ENCODE measurements at regions of chr16 and their contacts with region 1.

Region 1: GRCh38 chr16:1964506-1965395 is at the start of gene RPS2:
- DNase-seq: peak; percentile 99
- H3K4me3 ChIP-seq: peak within 1 kb of the TSS; percentile 88
- H3K27ac ChIP-seq: peak within 1 kb of the TSS; percentile 95
- H3K4me1 ChIP-seq: peaks cover 19% of the 10 kb centered on the region
- H3K27me3 ChIP-seq: no peaks in the 10 kb centered on the region
- CTCF ChIP-seq: peak; percentile 3; the same call in 1 of the 2 replicates
- total RNA-seq, gene RPS2: 3,326 and 3,385 TPM in 2 replicates

Region 2: DNA sequence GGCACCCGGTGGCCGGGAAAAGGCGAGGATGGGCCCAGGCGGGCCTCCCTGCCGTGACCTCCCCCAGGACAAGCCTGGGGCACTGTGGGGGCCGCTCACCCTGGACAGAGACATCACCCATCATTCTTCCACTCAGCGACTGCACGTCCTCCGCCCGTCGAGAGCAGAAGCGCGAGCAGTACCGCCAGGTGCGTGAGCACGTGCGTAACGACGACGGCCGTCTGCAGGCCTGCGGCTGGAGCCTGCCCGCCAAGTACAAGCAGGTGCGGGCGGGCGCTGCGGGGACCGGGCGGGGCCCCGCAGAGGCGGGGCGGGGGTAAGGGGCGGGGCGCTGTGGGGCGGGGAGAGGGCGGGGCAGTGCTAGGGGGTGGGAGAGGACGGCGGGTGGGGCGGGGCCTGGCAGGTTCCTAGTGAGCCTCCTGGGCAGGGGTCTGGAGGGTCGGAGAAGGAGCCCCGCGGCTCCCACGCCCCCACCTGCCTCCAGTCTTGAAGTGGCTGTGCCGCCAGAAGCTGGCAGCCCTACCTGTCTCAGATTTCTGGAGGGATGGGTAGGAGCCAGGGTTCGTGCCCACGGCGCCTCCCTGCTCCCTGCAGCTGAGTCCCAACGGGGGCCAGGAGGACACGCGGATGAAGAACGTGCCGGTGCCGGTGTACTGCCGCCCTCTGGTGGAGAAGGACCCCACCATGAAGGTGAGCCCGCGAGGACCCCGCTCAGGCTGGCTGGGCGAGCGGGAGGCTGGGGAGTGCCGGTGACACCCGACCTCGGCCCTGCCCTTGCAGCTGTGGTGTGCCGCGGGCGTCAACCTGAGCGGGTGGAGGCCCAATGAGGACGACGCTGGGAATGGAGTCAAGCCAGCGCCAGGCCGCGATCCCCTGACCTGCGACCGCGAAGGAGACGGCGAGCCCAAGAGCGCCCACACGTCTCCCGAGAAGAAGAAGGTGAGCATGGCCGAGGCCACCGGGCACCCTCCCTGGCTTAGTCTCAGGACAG is 200.9 kb before region 1 on chr16:
- CTCF ChIA-PET with region 1: no interaction called
- POLR2A ChIA-PET with region 1: no interaction called
- intact Hi-C with region 1: no loop called
- DNase-seq: peak; percentile 49
- H3K4me3 ChIP-seq: no peak overlapping the region
- H3K27ac ChIP-seq: no peak overlapping the region
- H3K4me1 ChIP-seq: no peaks in the 10 kb centered on the region
- H3K27me3 ChIP-seq: no peaks in the 10 kb centered on the region
- CTCF ChIP-seq: peak; percentile 45; the same call in 1 of the 2 replicates

Region 3: DNA sequence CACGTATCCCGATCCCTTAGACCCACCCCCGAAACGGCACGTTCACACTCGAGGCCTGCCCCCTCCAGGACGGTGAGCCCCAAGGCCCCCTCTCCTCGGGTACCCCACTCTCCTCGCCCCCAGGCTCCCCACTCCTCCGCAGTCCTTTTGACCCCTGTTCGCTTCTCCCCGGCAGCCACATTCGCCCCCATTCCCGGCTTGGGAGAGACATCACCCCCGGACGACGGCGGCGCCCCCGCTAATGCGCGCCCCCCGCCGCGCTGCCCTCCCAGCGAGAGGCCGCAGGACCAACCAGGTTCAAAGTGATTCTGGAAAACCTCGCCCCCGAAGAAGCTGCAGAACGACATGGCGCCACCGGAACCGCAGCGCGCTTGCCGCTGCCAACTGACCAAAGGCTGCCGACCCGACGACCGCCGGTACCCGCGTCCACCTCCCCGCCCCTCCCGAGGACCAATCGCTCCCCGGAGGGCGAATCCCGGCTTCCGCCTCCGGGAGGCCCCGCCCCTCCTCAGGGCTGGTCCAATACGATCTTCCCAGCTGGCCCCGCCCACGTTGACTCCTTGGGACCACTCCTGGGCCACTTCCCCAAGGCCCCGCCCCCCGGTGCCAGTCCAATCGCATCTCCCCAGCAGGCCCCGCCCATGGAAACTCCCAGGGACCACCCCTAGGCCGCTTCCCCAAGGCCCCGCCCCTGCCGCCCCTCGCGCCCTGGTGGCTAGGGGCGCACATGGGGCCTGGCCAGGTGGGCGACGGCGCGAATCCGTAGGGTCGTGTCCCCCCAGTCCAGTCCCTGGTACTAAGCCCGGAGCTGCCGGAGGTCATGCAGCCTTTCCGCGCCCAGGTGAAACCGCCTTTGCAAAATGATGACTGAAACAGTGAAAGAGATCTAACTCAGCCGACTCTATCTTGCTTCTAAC is 21.7 kb before region 1 on chr16 and contains the start of gene MSRB1:
- CTCF ChIA-PET with region 1: no interaction called
- POLR2A ChIA-PET with region 1: no interaction called
- intact Hi-C with region 1: no loop called
- DNase-seq: peak; percentile 100
- H3K4me3 ChIP-seq: peak within 1 kb of the TSS; percentile 73
- H3K27ac ChIP-seq: peak within 1 kb of the TSS; percentile 73
- H3K4me1 ChIP-seq: peaks cover 18% of the 10 kb centered on the region
- H3K27me3 ChIP-seq: no peaks in the 10 kb centered on the region
- CTCF ChIP-seq: 0 out of 2 replicates have a peak, but pooled peaks have one; percentile 13
- total RNA-seq, gene MSRB1: 17.7 and 23.4 TPM in 2 replicates

Region 4: DNA sequence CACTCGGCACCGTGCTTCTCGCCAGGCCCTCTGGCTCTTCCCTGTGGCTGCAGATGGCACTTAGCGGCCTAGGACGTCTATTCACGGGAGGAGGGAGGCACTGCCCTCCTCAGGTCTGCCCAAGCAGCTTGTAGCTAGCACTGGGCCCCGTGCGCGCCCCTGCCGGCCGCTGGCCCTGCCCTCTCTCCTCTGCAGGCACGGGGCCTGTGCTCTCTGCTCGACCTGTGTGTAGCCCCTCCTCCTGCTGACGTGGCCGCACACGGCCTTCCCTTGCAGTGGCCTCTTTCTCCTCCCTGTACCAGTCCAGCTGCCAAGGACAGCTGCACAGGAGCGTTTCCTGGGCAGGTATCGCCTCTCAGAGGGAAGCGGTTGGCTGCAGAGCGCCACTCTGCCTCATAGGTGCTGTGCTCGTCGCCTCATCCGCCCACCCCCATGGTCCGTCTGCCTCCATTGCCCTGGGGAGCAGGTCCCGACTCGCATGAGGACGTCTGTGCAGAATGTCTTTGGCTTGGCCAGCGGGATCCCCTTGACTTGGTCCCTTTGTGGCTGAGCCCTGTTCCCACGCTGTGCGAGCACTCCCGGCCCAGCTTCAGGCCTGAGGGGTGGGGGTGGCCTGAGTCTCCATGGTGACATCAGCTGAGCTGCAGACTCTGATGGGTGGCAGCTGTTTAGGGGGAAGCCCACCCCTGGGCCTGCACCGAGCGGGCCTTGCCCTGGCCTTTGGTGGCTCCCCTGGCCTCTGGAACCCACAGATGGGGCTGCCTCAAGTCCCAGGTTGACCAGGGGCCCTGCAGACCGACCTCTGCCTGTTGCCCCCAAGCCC is 117.6 kb after region 1 on chr16:
- CTCF ChIA-PET with region 1: no interaction called
- POLR2A ChIA-PET with region 1: no interaction called
- intact Hi-C with region 1: no loop called
- DNase-seq: no peak
- H3K4me3 ChIP-seq: no peak overlapping the region
- H3K27ac ChIP-seq: no peak overlapping the region
- H3K4me1 ChIP-seq: no peaks in the 10 kb centered on the region
- H3K27me3 ChIP-seq: no peaks in the 10 kb centered on the region
- CTCF ChIP-seq: no peak

Region 5: DNA sequence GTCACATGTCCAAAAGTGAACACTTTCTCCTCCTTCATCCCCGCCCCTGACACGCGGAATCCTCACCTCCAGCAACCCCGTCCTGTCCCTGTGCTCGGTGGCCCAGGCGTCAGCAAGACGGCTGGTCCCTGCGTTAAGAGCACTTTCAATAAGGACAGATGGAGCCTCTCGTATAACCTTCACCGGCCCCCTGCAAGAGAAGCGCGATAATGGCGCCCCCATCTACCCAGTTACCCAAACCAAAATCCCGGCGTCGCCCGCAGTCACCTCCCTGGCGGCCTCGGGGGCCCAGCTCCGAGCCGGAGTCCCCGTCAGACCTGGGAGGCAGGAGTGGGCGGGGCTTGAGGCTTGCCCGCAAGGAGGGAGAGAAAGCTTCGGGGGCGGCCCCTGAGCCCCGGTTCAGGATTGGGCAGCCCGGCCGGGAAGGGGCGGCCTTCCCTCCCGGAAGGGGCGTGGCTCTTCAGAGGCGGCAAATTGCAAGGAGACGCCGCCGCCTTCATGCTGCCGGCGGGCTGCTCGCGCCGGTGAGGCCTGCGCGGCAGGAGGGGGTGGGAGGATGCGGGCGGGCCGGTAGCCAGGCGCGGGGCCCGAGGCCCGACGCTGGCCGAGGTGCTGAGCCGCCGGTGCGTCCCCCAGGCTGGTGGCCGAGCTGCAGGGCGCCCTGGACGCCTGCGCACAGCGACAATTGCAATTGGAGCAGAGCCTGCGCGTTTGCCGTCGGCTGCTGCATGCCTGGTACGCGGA is 495.1 kb after region 1 on chr16 and contains the start of gene TEDC2:
- CTCF ChIA-PET with region 1: no interaction called
- POLR2A ChIA-PET with region 1: interaction called, 17 read pairs
- intact Hi-C with region 1: no loop called
- DNase-seq: peak; percentile 99
- H3K4me3 ChIP-seq: peak within 1 kb of the TSS; percentile 71
- H3K27ac ChIP-seq: peak within 1 kb of the TSS; percentile 81
- H3K4me1 ChIP-seq: peaks cover 14% of the 10 kb centered on the region
- H3K27me3 ChIP-seq: no peaks in the 10 kb centered on the region
- CTCF ChIP-seq: no peak
- total RNA-seq, gene TEDC2: 48.5 and 51.9 TPM in 2 replicates

Measured in A673 (cell line).